ENCODE measurements at regions of chr1 and their contacts with region 1.

Region 1: DNA sequence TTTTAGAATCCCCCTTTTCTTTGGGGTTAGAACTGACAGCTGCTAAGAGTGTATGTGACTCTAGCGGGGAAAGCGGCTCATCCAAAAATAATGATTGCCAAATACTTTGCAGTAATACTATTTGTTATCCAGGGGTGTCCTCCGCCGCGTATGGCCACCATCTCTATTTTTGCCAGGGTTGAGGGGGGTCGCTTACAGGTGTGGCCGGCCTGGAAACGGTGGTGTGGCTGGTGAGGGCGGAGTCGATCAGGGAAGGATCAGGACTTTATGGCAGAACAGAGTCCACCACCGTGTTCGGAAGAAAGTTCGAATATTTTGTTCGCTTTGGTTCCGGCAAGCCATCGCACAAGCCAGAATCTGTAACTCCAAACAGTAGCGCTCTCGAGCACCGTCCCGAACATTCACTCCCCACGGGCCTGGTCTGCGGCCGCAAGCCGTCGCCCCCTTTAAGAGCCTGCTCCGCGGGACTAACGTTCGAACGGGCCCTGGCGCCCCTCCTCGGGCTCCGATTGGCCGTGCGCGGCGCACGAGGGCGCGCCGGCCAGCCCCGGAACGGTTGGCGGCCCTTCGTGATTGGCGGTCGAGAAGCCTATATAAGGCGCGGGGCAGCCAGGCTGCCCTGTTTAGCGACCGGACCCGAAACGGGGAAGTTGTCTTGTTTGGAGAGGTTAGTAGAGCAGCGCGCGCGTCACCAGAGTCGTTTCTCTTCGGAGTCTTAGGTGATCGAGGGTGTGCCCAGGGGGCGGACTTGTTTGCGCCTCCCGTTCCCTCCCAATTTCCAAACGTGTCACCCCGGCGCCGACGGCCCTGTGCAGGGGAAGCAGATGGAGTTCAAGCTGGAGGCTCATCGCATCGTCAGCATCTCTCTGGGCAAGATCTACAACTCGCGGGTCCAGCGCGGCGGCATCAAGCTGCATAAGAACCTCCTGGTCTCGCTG is at the start of gene IER5:
- DNase-seq: peak; percentile 86 to 97 (median 92)
- ATAC-seq: peak; percentile 82
- H3K4me3 ChIP-seq: peak within 1 kb of the TSS; percentile 83
- H3K4me3 Mint-ChIP-seq: peak within 1 kb of the TSS; percentile 89 to 100 (median 99)
- H3K27ac ChIP-seq: peak within 1 kb of the TSS; percentile 98
- H3K27ac Mint-ChIP-seq: peak within 1 kb of the TSS; percentile 92 to 98 (median 97)
- H3K4me1 ChIP-seq: peaks cover 12 to 23% of the 10 kb centered on the region in 2 donors
- H3K4me1 Mint-ChIP-seq: peaks cover 25 to 56% (median 46%) of the 10 kb centered on the region in 7 donors
- H3K27me3 ChIP-seq: no peaks in the 10 kb centered on the region
- H3K27me3 Mint-ChIP-seq: peaks cover 0 to 9% (median 0%) of the 10 kb centered on the region in 5 donors
- total RNA-seq, gene IER5: 12.7 to 86.9 (median 46.0) TPM

Region 2: DNA sequence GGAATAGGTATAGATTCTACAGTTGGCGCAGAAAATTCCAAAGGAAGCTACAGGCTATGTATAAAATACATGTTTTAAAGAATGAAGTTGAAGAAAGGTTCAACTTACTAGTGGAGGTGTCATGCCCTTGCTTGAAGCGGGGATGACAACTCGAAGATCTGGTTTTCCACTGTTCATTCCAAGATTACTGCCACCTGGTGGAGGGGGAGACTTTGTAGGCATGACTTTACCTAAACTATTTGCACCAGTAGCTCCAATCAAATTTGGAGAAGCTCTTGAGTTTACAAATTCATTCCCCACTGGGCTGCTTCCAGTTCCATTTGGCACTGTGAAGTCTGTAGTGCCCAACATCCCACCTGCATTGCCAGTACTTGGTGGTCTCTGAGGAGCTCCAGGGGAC is 1640.9 kb before region 1 on chr1:
- CTCF ChIA-PET with region 1: no interaction called
- POLR2A ChIA-PET with region 1: no interaction called
- intact Hi-C with region 1: no loop called
- DNase-seq: peak in 3 of 9 donors; percentile 0 to 13 (median 2)
- ATAC-seq: no peak
- H3K4me3 ChIP-seq: no peak overlapping the region
- H3K4me3 Mint-ChIP-seq: no peak overlapping the region
- H3K27ac ChIP-seq: no peak overlapping the region
- H3K27ac Mint-ChIP-seq: no peak overlapping the region
- H3K4me1 ChIP-seq: no peaks in the 10 kb centered on the region
- H3K4me1 Mint-ChIP-seq: no peaks in the 10 kb centered on the region
- H3K27me3 ChIP-seq: no peaks in the 10 kb centered on the region
- H3K27me3 Mint-ChIP-seq: peaks cover 2 to 37% (median 22%) of the 10 kb centered on the region in 5 donors

Region 3: GRCh38 chr1:180881806-180882509 is 206.4 kb before region 1 on chr1:
- CTCF ChIA-PET with region 1: no interaction called
- POLR2A ChIA-PET with region 1: no interaction called
- intact Hi-C with region 1: loop called (anchors 5 kb)
- DNase-seq: peak in 3 of 9 donors; percentile 5 to 19 (median 10)
- ATAC-seq: no peak
- H3K4me3 ChIP-seq: no peak overlapping the region
- H3K4me3 Mint-ChIP-seq: no peak overlapping the region
- H3K27ac ChIP-seq: no peak overlapping the region
- H3K27ac Mint-ChIP-seq: peak overlapping the region in 1 of 9 donors; percentile 15
- H3K4me1 ChIP-seq: no peaks in the 10 kb centered on the region
- H3K4me1 Mint-ChIP-seq: peaks cover 0 to 5% (median 0%) of the 10 kb centered on the region in 7 donors
- H3K27me3 ChIP-seq: no peaks in the 10 kb centered on the region
- H3K27me3 Mint-ChIP-seq: no peaks in the 10 kb centered on the region

Region 4: GRCh38 chr1:181062836-181063428 is 25.4 kb before region 1 on chr1:
- CTCF ChIA-PET with region 1: interaction called, 5 read pairs
- POLR2A ChIA-PET with region 1: no interaction called
- intact Hi-C with region 1: loop called in 1 of 2 experiments (anchors 2 kb)
- DNase-seq: peak in 3 of 9 donors; percentile 19 to 42 (median 30)
- ATAC-seq: peak; percentile 81
- H3K4me3 ChIP-seq: peak overlapping the region; percentile 33
- H3K4me3 Mint-ChIP-seq: peak overlapping the region; percentile 59 to 81 (median 74)
- H3K27ac ChIP-seq: no peak overlapping the region
- H3K27ac Mint-ChIP-seq: peak overlapping the region; percentile 43 to 95 (median 85)
- H3K4me1 ChIP-seq: peaks cover 6 to 8% of the 10 kb centered on the region in 2 donors
- H3K4me1 Mint-ChIP-seq: peaks cover 14 to 26% (median 22%) of the 10 kb centered on the region in 7 donors
- H3K27me3 ChIP-seq: no peaks in the 10 kb centered on the region
- H3K27me3 Mint-ChIP-seq: no peaks in the 10 kb centered on the region

Region 5: GRCh38 chr1:181142096-181142958 is 54.0 kb after region 1 on chr1:
- CTCF ChIA-PET with region 1: interaction called, 98 read pairs
- POLR2A ChIA-PET with region 1: interaction called, 176 read pairs
- intact Hi-C with region 1: loop called (anchors 1 kb)
- DNase-seq: peak; percentile 70 to 91 (median 83)
- ATAC-seq: peak; percentile 96
- H3K4me3 ChIP-seq: no peak overlapping the region
- H3K4me3 Mint-ChIP-seq: peak overlapping the region in 4 of 10 donors; percentile 2 to 63 (median 18)
- H3K27ac ChIP-seq: no peak overlapping the region
- H3K27ac Mint-ChIP-seq: peak overlapping the region in 4 of 9 donors; percentile 28 to 81 (median 54)
- H3K4me1 ChIP-seq: peaks cover 7 to 15% of the 10 kb centered on the region in 2 donors
- H3K4me1 Mint-ChIP-seq: peaks cover 18 to 62% (median 34%) of the 10 kb centered on the region in 7 donors
- H3K27me3 ChIP-seq: no peaks in the 10 kb centered on the region
- H3K27me3 Mint-ChIP-seq: peaks cover 0 to 24% (median 0%) of the 10 kb centered on the region in 5 donors

Region 6: GRCh38 chr1:181166377-181167196 is 78.2 kb after region 1 on chr1:
- CTCF ChIA-PET with region 1: interaction called, 66 read pairs
- POLR2A ChIA-PET with region 1: interaction called, 29 read pairs
- intact Hi-C with region 1: loop called (anchors 1 kb)
- DNase-seq: peak; percentile 35 to 84 (median 78)
- ATAC-seq: peak; percentile 99
- H3K4me3 ChIP-seq: no peak overlapping the region
- H3K4me3 Mint-ChIP-seq: peak overlapping the region; percentile 58 to 85 (median 80)
- H3K27ac ChIP-seq: no peak overlapping the region
- H3K27ac Mint-ChIP-seq: peak overlapping the region in 8 of 9 donors; percentile 43 to 92 (median 76)
- H3K4me1 ChIP-seq: peaks cover 0 to 5% of the 10 kb centered on the region in 2 donors
- H3K4me1 Mint-ChIP-seq: peaks cover 4 to 10% (median 9%) of the 10 kb centered on the region in 7 donors
- H3K27me3 ChIP-seq: no peaks in the 10 kb centered on the region
- H3K27me3 Mint-ChIP-seq: peaks cover 0 to 32% (median 0%) of the 10 kb centered on the region in 5 donors

Region 7: DNA sequence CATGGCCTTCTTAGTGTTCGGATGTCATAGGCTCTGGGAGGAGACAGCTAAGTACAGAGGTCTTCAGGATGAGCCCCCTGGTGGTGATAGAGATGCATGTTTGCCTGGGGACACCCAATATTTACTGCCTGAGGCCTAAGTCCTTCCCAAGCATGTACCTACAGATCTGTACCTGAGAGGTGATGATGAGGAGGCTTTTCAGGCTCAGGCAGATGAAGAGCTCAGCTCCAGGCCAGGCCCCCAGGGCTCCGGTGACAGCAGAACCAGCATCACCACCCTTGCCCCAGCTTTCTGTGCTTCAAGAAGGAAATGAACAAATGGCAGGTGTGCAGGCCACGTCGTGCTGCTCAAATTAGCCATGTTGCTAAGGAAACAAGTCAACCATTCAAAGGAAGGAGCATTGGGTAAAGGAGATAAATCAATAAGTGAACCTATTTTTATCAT is 416.1 kb after region 1 on chr1:
- CTCF ChIA-PET with region 1: no interaction called
- POLR2A ChIA-PET with region 1: no interaction called
- intact Hi-C with region 1: no loop called
- DNase-seq: peak in 3 of 9 donors; percentile 2 to 7 (median 2)
- ATAC-seq: no peak
- H3K4me3 ChIP-seq: no peak overlapping the region
- H3K4me3 Mint-ChIP-seq: no peak overlapping the region
- H3K27ac ChIP-seq: no peak overlapping the region
- H3K27ac Mint-ChIP-seq: no peak overlapping the region
- H3K4me1 ChIP-seq: no peaks in the 10 kb centered on the region
- H3K4me1 Mint-ChIP-seq: peaks cover 0 to 7% (median 0%) of the 10 kb centered on the region in 7 donors
- H3K27me3 ChIP-seq: no peaks in the 10 kb centered on the region
- H3K27me3 Mint-ChIP-seq: peaks cover 9 to 21% (median 16%) of the 10 kb centered on the region in 5 donors

Region 8: DNA sequence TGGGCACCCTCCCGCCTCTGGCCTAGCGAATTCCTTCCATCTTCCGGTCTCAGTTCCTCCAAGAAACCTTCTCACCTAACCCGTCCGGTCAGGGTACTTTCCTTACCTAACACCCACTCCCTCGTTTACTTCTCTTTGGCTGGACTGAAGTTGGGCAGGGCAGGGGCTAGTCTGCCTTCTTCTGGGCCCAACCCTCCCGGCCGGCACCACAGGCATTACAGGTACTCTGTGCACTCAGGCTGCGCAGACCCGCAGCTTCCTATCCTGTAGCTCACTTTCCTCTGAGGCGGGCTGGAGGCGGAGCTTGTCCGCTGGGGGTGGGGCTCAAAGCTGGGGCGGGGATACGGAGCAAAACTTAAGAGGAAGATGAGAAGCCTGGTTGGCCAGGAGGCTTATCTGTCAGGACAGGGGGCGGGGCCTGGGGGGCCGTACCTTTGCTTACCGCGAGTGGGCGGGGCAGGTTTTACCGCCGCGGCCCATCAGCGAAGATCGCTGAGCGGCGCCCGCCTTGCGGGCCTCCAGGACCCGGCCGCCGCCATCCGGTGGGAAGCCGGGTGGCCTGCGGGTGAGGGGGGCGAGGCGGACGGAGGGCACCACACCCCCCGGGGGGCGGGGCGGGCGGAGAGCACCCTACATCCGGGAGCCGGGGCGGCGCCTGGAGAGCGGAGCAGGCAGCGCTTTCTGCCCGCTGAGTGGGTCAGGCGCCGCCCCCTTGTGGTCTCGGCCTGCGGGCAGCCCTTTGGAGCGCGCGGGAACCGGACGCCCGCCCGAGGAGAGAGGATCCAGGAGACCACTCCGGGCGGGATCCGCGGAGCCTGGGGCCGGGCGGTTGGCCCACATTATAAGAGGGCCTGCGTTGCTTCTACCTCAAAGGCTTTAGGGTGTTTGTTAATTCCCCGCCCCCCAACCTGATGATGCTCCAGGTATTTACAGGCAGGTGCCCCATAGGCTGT is 941.3 kb after region 1 on chr1:
- CTCF ChIA-PET with region 1: no interaction called
- POLR2A ChIA-PET with region 1: no interaction called
- intact Hi-C with region 1: loop called in 1 of 2 experiments (anchors 1 kb)
- DNase-seq: peak; percentile 95 to 98 (median 98)
- ATAC-seq: peak; percentile 97
- H3K4me3 ChIP-seq: peak overlapping the region; percentile 72
- H3K4me3 Mint-ChIP-seq: peak overlapping the region; percentile 90 to 100 (median 96)
- H3K27ac ChIP-seq: peak overlapping the region; percentile 87
- H3K27ac Mint-ChIP-seq: peak overlapping the region; percentile 94 to 100 (median 99)
- H3K4me1 ChIP-seq: peaks cover 9 to 14% of the 10 kb centered on the region in 2 donors
- H3K4me1 Mint-ChIP-seq: peaks cover 12 to 21% (median 18%) of the 10 kb centered on the region in 7 donors
- H3K27me3 ChIP-seq: no peaks in the 10 kb centered on the region
- H3K27me3 Mint-ChIP-seq: peaks cover 0 to 6% (median 0%) of the 10 kb centered on the region in 5 donors